ENCODE measurements at regions of chr9 and their contacts with region 1.

Region 1: GRCh38 chr9:15977438-15977837 is 424.6 kb downstream of the CCDC171 start:
- DNase-seq: no peak
- H3K4me3 ChIP-seq: no peak overlapping the region
- H3K27ac ChIP-seq: no peak overlapping the region
- H3K4me1 ChIP-seq: no peaks in the 10 kb centered on the region
- H3K27me3 ChIP-seq: no peaks in the 10 kb centered on the region
- CTCF ChIP-seq: no peak
- POLR2A ChIP-seq: no peak

Region 2: GRCh38 chr9:17402309-17402708 is 1424.9 kb after region 1 on chr9:
- intact Hi-C with region 1: loop called (anchors 10 kb)
- DNase-seq: no peak
- H3K4me3 ChIP-seq: no peak overlapping the region
- H3K27ac ChIP-seq: no peak overlapping the region
- H3K4me1 ChIP-seq: no peaks in the 10 kb centered on the region
- H3K27me3 ChIP-seq: no peaks in the 10 kb centered on the region
- CTCF ChIP-seq: no peak
- POLR2A ChIP-seq: no peak